Left cardiac atrium (tissue), 4 donors: ENCODE measurements at regions of chr22 and their contacts with region 1.

Region 1: DNA sequence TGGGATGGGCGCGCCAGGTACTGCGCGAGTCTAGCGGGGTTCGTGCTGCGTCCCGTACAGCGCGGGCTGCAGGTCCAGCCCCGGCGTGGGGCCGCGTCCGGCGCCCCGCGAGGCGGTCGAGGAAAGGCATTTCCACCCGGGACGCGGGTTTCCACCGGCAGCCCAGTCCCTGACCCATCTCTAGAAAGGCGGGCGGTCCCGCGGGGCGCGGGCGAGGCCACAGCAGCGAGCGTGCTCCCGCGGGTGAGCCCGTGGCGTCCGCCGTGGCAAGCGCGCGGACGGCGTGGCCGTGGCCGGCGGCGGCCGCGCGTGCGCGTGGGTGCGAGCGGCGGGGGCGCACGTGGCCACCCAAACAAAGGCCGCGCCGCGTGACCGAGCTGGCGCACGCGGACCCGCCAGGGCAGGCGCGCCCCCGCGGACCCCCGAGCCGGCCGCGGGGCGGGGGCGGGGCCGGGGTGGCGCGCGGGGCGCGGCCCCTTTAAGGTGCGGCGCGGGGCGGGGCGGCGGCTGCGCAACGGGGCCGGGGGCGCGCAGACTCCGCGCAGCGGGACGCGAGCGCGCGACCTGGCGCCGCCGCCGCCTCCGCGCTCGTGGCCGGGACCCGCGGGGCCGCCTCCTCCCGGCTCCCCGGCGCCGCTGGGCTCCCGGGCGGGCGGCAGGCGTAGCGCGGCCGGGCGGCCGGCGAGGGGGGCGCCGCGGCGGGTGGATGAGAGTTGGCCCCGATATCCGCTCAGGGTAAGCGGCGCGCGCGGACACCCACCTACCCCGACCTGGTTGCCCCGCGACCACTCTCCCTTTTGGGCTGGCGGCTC is 39.3 kb upstream of the CELSR1 start:
- DNase-seq: peak; percentile 68
- ATAC-seq: peak; percentile 29 to 54

Region 2: DNA sequence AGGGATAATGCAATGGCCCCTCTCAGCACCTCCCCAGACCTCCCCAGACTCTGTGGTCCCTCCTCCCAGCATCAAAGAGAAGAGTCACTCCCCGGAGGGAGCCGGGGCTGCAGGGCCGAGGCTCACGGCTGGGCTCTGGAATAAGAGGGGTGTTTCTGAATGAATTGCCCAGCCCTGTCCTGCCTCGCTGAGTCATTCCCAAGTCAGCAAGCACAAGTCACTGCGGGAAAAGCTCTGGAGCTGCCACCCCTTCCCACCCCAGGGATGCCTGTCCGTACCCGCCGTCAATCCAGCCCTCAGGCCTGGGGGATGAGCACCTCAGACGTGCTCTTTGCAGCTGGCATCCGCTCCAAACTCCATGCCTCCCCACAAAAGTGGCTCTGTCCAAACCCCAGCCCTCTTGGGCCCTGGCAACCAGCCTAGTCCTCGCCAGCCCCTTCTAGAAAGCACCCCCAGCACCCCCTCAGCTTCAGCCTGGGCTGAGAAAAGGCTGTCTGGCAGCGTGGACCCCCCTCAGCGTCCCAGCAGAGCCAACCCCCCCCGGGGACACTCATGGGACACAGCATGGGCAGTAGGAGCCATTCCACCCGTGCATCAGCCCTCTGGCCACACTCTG is 62.1 kb before region 1 on chr22:
- intact Hi-C with region 1: no loop called
- DNase-seq: no peak
- ATAC-seq: no peak

Region 3: GRCh38 chr22:46617207-46617985 is 40.6 kb after region 1 on chr22:
- intact Hi-C with region 1: loop called in 1 of 2 experiments (anchors 1 kb)
- DNase-seq: no peak
- ATAC-seq: no peak

Region 4: DNA sequence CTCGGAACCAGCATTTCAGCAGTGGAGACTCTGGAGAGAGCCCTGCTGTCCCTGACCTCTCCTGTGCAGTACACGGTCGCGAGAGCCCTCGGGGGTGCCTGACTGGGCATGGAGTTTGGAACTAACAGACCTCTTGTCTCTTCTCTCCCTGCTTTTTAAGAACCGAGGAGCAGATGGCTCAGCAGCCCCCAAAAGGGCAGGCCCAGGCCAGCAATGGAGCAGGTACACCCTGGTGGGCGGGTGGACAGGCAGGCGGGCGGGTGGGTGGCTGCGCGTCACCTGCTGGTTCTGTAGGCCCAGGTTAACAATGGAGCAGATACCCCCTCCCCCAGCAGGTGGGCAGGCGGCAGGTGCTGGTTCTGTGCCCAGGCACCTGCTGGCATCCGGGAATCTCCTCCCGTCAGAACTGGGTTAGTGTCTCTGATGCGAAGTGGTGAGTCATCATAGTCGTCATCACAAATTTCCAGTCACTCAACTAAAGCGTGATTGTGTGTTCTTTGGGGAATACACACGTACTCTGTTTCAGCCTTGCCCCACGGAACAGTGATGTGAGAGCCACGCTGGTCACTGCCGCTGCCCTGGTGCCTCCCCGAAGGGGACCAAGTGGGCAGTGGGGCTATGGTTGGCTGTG is 84.6 kb after region 1 on chr22:
- intact Hi-C with region 1: loop called in 1 of 2 experiments (anchors 5 kb)
- DNase-seq: peak; percentile 52
- ATAC-seq: peak; percentile 28 to 77

Region 5: DNA sequence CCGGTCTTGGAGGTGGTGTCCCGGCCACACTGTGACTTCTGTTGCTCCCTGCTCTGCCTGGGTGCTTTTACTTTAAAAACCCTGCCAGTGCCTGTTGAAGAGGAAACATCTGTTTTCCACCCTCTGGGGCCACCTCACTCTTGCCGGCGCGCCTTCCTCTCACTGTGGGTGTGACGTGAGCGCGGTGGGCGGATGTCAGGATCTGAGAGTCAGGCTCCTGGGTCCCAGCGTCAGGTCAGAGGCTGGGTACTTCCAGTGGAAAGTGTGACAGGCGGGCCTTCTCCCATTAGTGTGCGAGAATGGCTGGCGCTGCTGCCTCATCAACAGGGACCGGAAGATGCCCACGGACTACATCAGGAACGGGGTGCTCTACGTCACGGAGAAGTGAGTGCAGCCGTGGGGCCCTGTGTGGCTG is 97.6 kb after region 1 on chr22:
- intact Hi-C with region 1: loop called in 1 of 2 experiments (anchors 10 kb)
- DNase-seq: peak; percentile 81
- ATAC-seq: peak; percentile 5 to 35

Region 6: DNA sequence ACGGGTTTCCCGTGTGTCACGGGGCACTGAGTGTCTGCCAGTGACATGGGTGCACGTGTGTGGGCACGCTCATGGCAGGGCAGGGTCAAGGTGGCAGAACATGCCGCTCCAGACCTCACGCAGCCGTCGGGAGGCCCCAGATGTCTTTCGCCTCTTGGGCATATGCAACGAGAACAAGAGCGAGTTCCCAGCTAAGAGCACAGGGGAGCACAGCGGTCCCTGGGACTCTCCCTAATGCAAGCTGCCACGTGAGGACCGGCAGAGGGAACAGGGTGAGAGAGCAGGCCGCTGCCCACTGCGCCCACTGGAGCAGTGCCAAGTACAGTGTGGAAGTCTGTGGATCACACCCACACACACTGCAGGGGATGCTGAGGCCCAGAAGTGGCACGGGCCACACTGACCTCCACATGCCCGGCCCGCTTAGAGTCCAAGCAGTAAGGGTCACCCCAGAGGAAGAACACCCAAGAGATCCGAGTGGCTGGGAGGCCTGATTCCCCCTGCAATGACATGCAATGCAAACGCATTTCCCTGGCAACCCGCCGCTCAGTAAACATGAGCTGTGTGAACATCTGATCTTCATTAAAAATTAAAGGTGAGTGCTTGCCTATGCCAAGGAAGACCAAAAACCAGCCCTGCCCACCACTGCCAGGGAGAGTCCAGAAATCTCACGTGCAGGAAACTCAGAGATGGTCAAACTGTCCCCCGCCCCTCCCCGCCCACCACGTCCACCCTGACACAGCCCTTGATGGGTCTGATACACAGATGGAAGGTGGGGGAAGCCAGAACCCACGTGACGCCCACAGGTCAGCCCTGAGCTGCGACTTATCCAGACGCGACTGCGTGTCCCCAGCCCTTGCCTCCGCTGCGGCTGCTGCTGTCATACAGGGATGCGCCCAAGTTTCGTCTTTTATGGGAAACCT is 149.6 kb after region 1 on chr22:
- intact Hi-C with region 1: loop called in 1 of 2 experiments (anchors 5 kb)
- DNase-seq: no peak
- ATAC-seq: peak; percentile 33 to 48